ENCODE measurements at regions of chr15 and their contacts with region 1.

Region 1: GRCh38 chr15:77579498-77580188 is 53.1 kb downstream of the LINGO1 start:
- DNase-seq: no peak
- H3K27ac ChIP-seq: no peak overlapping the region
- CTCF ChIP-seq: no peak

Region 2: DNA sequence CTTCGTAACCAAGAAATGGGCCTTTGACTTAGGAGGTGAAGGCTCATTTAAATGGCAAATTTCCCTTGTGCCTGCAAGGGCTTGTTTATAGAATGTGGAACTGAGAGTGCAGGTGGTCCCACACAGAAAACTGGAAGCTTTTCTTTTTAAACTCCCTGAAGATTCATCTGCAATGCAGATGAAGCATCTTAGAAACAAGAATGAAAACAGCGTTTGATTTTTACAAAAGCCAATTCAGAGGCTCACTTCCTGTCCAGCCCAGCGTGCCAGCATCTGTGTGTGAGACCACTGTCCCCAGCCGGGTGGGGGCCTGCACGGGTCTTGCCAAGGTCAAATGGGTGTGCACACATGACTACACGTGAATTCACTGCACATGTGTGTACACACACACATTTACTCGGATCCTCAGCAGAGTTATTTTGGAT is 41.6 kb before region 1 on chr15:
- CTCF ChIA-PET with region 1: interaction called, 11 read pairs
- POLR2A ChIA-PET with region 1: no interaction called
- DNase-seq: no peak
- H3K27ac ChIP-seq: no peak overlapping the region
- CTCF ChIP-seq: no peak